Activated naive CD4-positive, alpha-beta T cell treated with anti-CD3 and anti-CD28 coated beads for 36 hours (primary cell): ENCODE measurements at regions of chr14 and their contacts with region 1.

Region 1: DNA sequence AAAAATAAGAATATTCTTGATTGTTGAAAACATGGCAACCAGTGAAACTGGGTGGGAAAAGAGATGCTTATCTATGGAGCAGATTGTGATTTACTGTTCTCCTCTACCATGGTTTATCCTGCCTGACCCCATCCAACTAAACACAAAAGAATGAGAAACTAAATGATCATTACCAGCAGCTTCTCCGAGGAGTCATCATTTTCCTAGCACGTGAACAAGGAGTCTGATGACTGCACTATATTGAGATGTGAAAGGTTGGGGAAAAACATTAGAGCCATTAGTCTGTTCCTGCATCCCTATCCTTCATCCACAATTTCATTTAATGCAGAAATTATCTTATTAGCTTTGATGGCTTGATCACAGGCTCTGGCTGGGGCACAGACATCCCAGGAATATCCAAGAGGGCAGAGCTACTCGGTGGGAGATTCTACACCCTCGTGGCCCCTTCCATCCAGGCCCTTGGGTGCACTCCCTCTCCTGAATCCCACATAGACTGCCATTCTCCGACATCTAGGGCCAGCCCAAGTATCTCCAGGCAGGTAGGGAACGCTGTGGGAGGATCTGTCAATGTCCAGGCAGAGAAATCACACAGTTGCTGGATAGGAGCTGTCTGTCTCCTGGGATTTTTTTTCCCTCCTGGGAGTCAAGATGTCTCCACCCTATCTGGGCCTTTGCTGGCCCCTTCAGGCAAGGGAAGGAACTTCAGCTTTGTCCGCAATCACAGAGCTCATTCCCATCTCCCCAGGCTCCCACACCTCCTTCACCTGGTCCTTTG is 43.3 kb upstream of the DHRS4 start:
- DNase-seq: peak; percentile 44
- H3K4me3 Mint-ChIP-seq: no peak overlapping the region
- H3K27ac Mint-ChIP-seq: no peak overlapping the region
- H3K4me1 Mint-ChIP-seq: no peaks in the 10 kb centered on the region
- H3K27me3 Mint-ChIP-seq: peaks cover 7% of the 10 kb centered on the region

Region 2: GRCh38 chr14:23727566-23728335 is 182.5 kb before region 1 on chr14:
- CTCF ChIA-PET with region 1: interaction called, 10 read pairs
- intact Hi-C with region 1: no loop called
- DNase-seq: no peak
- H3K4me3 Mint-ChIP-seq: no peak overlapping the region
- H3K27ac Mint-ChIP-seq: no peak overlapping the region
- H3K4me1 Mint-ChIP-seq: no peaks in the 10 kb centered on the region
- H3K27me3 Mint-ChIP-seq: no peaks in the 10 kb centered on the region

Region 3: GRCh38 chr14:23877111-23877510 is 33.2 kb before region 1 on chr14:
- CTCF ChIA-PET with region 1: no interaction called
- intact Hi-C with region 1: no loop called
- DNase-seq: no peak
- H3K4me3 Mint-ChIP-seq: no peak overlapping the region
- H3K27ac Mint-ChIP-seq: no peak overlapping the region
- H3K4me1 Mint-ChIP-seq: peaks cover 3% of the 10 kb centered on the region
- H3K27me3 Mint-ChIP-seq: no peaks in the 10 kb centered on the region

Region 4: DNA sequence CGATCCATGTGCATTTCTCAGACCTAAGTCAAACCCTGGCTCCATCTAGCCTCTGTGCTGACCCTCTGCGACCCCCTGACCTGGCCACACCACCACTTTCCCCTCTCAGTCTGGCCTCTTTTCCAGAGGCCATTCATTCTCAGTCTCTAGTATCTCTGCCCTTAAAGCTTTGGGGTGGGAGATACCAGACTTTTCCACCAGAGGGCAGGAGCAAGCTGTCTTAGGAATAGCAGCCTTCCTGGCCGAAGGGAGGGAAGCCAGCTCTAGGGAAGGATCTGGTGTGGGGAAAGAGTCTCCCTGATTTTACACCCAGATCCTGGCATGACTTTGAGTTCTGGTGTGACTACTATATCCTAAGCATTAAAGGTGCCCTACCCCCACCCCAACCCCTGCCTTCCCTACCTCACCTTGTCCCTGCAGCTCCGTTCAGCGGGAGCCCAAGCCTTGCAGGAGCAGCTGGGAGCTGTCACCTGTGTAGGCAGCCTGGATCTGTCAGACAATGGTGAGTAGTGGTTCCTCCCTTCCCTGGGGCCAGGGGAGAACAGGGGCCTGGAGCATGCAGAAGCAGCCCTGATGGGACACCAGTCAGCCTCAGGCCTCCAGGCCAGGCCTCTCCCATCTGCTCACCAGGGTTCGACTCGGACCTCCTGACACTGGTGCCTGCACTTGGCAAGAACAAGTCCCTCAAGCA is 148.1 kb after region 1 on chr14:
- CTCF ChIA-PET with region 1: no interaction called
- intact Hi-C with region 1: no loop called
- DNase-seq: peak; percentile 89
- H3K4me3 Mint-ChIP-seq: no peak overlapping the region
- H3K27ac Mint-ChIP-seq: peak overlapping the region; percentile 38
- H3K4me1 Mint-ChIP-seq: peaks cover 5% of the 10 kb centered on the region
- H3K27me3 Mint-ChIP-seq: peaks cover 2% of the 10 kb centered on the region